Activated CD8-positive, alpha-beta memory T cell treated with anti-CD3 and anti-CD28 coated beads, Interleukin-2, amount 10 ng/mL, durations not matched to agents 7 days and 5 days (primary cell): ENCODE measurements at regions of chr18 and their contacts with region 1.

Region 1: DNA sequence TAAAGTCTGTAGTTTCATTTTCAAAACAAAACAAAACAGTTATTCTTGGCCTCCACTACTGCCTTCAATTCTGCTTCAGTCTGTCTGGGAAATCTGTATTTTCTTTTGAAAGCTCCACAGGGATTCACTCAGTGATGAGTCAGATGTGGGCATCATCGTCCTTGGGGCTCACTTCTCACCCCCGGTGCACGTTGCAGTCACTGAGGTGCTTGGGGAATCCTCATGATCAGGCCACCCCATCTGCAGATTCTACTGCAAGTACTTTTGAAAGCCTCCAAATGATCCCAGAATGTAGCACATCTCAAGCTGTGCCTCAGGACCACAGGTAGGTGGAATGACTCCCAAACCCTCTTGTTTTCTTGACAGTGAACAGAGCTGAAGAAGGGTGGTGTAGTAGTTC is 34.3 kb downstream of the LPIN2 start:
- DNase-seq: peak; percentile 59
- ATAC-seq: peak; percentile 20
- H3K4me3 Mint-ChIP-seq: peak overlapping the region; percentile 73
- H3K27ac Mint-ChIP-seq: peak overlapping the region; percentile 91
- H3K4me1 Mint-ChIP-seq: peaks cover 82% of the 10 kb centered on the region
- H3K27me3 Mint-ChIP-seq: no peaks in the 10 kb centered on the region

Region 2: DNA sequence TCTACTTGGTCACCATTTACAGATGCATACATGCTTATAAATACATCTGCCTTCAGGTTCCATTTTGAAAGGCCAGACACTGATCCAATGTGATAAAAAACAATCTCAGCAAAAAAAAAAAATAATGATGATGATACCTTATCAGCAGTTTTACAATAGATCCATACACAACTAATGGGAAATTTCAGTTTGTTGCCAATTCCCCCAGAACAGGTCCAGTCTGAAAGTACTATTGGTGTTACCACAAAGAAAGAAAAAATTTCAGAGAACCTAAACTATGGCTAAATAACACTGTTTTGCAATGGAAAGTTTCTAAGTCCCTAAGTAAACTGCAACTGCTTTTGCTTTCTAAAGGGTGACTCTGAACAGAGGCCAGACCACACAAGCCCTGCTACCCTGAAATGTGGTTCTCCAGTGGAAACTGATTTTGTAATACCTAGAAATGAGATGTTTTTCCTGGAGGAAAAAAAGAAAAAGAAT is 19.8 kb before region 1 on chr18:
- CTCF ChIA-PET with region 1: interaction called, 111 read pairs
- DNase-seq: peak; percentile 83
- ATAC-seq: peak; percentile 40
- H3K4me3 Mint-ChIP-seq: peak overlapping the region; percentile 50
- H3K27ac Mint-ChIP-seq: peak overlapping the region; percentile 100
- H3K4me1 Mint-ChIP-seq: peaks cover 88% of the 10 kb centered on the region
- H3K27me3 Mint-ChIP-seq: no peaks in the 10 kb centered on the region

Region 3: DNA sequence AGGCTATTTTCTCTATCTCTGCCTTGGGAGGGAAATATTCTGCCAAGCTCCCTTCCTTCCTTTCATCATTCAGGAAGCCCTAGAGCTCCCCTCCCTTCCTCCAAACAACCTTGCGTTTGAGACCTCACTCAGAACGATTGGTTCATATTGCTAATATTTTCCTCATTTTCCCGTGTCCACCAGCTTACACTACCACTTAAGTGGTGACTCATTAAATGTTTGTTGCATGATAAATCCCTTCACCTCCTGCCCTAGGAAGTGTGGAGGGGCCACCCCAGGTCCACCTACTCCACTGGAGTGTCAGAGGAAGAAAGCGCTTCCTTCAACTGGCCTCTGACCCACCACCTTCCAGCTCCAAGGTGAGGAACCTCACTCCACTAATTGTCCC is 36.6 kb after region 1 on chr18:
- CTCF ChIA-PET with region 1: no interaction called
- DNase-seq: no peak
- ATAC-seq: no peak
- H3K4me3 Mint-ChIP-seq: no peak overlapping the region
- H3K27ac Mint-ChIP-seq: no peak overlapping the region
- H3K4me1 Mint-ChIP-seq: peaks cover 46% of the 10 kb centered on the region
- H3K27me3 Mint-ChIP-seq: peaks cover 5% of the 10 kb centered on the region

Region 4: GRCh38 chr18:3245853-3246634 is 267.4 kb after region 1 on chr18:
- CTCF ChIA-PET with region 1: interaction called, 11 read pairs
- DNase-seq: peak; percentile 90
- ATAC-seq: peak; percentile 56
- H3K4me3 Mint-ChIP-seq: peak overlapping the region; percentile 92
- H3K27ac Mint-ChIP-seq: peak overlapping the region; percentile 99
- H3K4me1 Mint-ChIP-seq: peaks cover 24% of the 10 kb centered on the region
- H3K27me3 Mint-ChIP-seq: peaks cover 4% of the 10 kb centered on the region

Region 5: GRCh38 chr18:3329471-3329870 is 350.8 kb after region 1 on chr18:
- CTCF ChIA-PET with region 1: no interaction called
- DNase-seq: no peak
- ATAC-seq: no peak
- H3K4me3 Mint-ChIP-seq: no peak overlapping the region
- H3K27ac Mint-ChIP-seq: no peak overlapping the region
- H3K4me1 Mint-ChIP-seq: no peaks in the 10 kb centered on the region
- H3K27me3 Mint-ChIP-seq: peaks cover 22% of the 10 kb centered on the region

Region 6: GRCh38 chr18:3350566-3351527 is 372.2 kb after region 1 on chr18:
- CTCF ChIA-PET with region 1: no interaction called
- DNase-seq: no peak
- ATAC-seq: no peak
- H3K4me3 Mint-ChIP-seq: no peak overlapping the region
- H3K27ac Mint-ChIP-seq: no peak overlapping the region
- H3K4me1 Mint-ChIP-seq: no peaks in the 10 kb centered on the region
- H3K27me3 Mint-ChIP-seq: peaks cover 14% of the 10 kb centered on the region

Region 7: DNA sequence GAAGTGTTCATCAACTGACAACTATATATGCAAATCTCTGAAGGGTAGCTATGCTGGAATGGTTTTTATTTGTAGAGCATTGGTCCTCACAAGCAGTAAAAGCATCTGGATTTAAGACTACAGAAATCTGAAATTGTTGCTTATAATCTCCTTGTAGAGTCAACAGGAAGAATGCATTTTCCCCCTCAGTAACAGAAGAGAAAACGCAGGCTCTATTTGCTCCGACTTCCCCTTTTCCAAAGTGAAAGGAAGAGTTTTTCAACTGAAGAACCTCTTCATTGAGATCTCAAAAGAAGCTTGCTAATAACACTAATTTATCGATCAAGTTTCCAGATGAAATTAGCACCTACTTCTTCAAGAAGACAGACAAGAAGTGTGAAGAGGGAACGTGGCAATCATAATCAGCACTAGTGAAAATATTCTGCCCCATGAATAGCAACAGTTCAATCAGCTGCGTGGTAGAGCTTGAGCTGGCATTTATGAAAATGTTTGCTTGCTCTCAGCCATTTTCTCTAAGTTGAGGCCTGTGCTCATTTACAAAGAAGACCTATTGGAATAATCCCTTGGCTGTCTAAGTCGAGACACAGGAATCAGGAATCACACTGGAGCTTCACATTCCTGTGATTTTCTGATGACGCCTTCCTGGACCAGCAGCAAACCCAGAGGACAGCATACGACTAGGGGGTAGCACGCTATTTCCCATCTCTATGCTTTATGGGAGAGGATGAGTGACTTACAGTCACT is 515.0 kb after region 1 on chr18:
- CTCF ChIA-PET with region 1: no interaction called
- DNase-seq: no peak
- ATAC-seq: no peak
- H3K4me3 Mint-ChIP-seq: no peak overlapping the region
- H3K27ac Mint-ChIP-seq: no peak overlapping the region
- H3K4me1 Mint-ChIP-seq: peaks cover 5% of the 10 kb centered on the region
- H3K27me3 Mint-ChIP-seq: peaks cover 48% of the 10 kb centered on the region